Lower leg skin (tissue), 4 donors: ENCODE measurements at regions of chr5 and their contacts with region 1.

Region 1: DNA sequence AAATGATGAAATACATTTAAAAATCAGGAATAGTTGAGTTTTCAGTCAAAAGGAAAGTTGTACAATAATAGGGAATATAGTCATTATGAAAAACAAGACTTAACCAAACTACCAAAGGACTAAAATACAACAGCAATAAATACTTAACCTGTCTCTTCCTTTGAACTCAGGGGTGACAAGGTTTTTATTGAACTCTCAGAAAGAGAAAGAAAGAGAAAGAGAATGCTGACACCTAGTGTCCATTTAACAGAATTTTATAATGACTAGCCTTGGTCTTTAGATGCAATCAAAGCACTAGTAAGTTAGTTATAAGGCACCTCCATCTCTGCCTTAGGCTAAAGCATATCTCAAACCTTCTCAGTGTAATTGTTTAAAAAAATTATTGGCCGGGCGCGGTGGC is 47.5 kb downstream of the UIMC1 start:
- DNase-seq: no peak
- H3K4me3 ChIP-seq: no peak overlapping the region
- CTCF ChIP-seq: no peak
- POLR2A ChIP-seq: no peak

Region 2: DNA sequence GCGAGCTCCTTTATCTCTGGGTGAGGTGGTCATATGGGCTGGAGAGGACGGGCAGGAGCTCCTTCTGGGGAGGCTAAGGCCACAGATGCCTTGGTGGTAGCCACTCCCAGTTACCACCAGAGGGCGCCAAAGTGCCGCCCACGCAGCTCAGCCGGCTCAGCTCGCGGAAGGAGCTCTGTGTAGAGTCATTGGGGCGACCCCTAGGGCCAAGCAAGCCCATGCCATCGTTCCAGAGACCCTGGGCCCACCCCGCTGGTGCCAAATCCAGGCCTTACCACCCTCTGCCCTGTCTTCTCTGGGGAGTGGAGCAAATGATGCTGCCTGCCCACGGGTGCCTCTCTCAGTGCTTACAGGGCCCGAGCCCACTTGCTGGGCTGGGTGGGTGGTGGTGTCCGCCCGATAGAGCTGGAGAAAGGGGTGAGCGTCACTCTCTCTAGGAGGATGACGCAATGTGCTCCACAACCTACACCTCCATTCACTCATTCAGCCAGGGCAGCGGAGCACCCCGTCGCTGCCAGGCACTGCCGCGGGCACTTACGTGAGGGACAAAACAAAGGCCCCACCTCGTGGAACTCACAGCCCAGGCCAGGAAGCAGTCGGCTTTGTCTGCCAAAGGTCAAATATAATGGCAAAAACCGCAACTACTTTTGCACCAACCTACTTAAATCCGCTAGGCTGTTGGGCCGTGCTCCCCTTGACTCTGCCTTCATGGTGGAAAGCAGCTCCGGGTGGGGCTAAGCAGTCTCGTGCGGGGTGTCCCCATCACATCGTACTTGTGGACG is 298.0 kb before region 1 on chr5:
- intact Hi-C with region 1: loop called (anchors 10 kb)
- DNase-seq: peak; percentile 33 to 91
- H3K4me3 ChIP-seq: no peak overlapping the region
- CTCF ChIP-seq: peak in 1 of 3 donors; percentile 76
- POLR2A ChIP-seq: no peak

Region 3: DNA sequence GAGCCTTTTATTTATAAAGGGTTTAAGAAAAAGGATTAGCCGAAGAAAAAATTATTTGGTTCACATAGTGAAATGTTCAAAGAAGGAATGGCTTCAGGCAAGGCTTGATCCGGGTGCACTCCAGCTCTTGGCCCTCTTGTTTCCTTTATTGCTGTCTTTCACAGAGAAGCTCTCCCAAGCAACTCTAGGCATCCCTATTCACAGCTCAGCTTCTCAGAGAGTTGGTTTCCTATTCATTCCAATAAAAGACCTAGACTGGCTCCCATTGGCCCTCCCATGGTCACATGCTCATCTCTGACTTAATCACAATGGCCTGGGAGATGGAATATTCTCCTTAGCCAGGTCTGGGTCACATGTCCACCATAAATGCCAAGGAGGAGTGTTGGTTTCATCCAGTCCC is 118.3 kb after region 1 on chr5:
- intact Hi-C with region 1: no loop called
- DNase-seq: no peak
- H3K4me3 ChIP-seq: no peak overlapping the region
- CTCF ChIP-seq: no peak
- POLR2A ChIP-seq: no peak